Motor neuron (in vitro differentiated cells): ENCODE measurements at regions of chr6 and their contacts with region 1.

Region 1: DNA sequence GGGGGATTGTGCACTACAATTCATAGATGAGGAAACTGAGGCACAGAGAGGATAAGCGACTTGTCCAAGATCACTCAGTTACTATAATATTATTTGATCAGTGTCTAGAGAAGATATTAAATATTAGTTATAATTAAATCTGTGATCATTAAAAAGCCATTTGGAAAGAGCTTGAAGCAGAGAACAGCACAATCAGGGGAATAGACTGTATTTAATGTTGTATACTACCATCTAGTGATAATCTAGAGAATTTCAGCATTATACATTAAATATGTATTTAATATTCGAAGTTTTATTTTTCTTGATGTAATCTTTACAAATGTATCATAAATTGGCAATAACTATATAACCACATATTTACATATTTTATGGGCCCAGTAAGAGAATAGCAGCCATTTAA is 20.1 kb upstream of the MTCL3 start:
- ATAC-seq: peak in 4 of 8 experiments; percentile 23 to 57 (median 34)
- H3K4me3 ChIP-seq: no peak overlapping the region
- H3K27ac ChIP-seq: no peak overlapping the region
- H3K4me1 ChIP-seq: no peaks in the 10 kb centered on the region

Region 2: GRCh38 chr6:127302728-127303660 is 236.3 kb before region 1 on chr6:
- in situ Hi-C with region 1: loop called in 3 of 9 experiments (anchors 25 kb)
- ATAC-seq: peak in 1 of 8 experiments; percentile 20
- H3K4me3 ChIP-seq: no peak overlapping the region
- H3K27ac ChIP-seq: no peak overlapping the region
- H3K4me1 ChIP-seq: no peaks in the 10 kb centered on the region

Region 3: DNA sequence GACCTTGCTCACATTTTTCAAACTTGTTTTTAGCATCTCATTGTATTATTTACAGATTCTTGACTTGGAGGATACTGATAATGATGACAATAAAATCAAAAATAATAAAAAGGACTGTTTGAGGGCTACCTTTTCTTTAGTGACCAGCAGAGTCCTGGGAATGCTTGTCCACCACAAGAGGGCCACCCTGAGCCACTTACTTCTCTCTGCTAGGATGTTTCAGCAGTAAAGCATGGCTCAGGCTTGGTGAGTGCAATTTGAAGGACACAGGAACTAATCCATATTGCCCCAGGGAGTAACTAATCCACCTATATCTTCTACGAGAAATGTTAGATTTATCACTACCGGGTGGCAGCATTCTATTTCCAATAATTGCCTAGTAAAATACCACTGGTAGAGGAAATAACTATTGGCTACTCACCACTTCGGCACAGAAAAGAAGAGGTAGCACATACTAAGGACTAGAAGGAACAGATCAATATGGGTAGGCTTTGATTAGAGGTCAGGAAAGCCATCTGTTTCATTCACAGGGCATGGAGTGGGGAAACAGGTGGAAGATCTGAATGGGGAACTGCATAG is 74.3 kb before region 1 on chr6:
- in situ Hi-C with region 1: loop called in 1 of 9 experiments (anchors 5 kb)
- ATAC-seq: peak; percentile 82 to 98 (median 94)
- H3K4me3 ChIP-seq: no peak overlapping the region
- H3K27ac ChIP-seq: no peak overlapping the region
- H3K4me1 ChIP-seq: peaks cover 3 to 9% of the 10 kb centered on the region in 2 donors